Vagina (tissue), 2 donors: ENCODE measurements at regions of chr9 and their contacts with region 1.

Region 1: DNA sequence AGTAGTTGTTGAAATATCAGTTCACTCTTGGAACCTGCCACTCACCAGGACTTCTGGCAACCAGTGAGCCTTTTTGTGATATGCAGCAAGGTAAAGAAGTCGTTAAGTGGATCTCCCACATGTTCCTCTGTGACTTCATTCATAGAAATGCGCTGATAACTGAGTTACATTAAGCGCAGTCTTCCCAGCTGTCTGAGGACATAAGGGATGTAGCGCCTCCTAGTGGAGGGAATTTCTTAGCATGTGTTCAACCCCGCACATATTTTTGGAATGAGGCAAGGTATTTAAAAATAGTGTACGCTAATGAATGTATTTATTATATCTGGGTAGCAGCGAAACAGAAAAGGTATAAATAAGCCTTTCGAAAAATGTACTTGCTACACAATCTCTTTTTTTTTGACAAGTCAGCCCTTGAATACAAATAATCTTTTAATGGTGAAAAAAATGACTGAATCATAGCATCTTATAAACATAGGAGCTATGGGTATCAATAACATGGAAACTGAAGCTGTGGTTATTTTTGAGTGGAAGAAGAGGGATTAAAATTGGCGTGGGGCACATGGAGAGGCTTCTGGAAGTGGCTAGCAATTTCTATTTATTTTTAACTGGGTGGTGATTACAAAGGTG is 38.0 kb downstream of the PALM2AKAP2 start:
- DNase-seq: no peak
- H3K4me3 ChIP-seq: no peak overlapping the region
- H3K27ac ChIP-seq: no peak overlapping the region
- H3K4me1 ChIP-seq: peaks cover 16% of the 10 kb centered on the region
- H3K27me3 ChIP-seq: no peaks in the 10 kb centered on the region
- CTCF ChIP-seq: peak; percentile 8 to 87 (median 70)
- POLR2A ChIP-seq: no peak

Region 2: GRCh38 chr9:109574068-109574882 is 243.7 kb before region 1 on chr9:
- intact Hi-C with region 1: loop called (anchors 10 kb)
- DNase-seq: no peak
- H3K4me3 ChIP-seq: no peak overlapping the region
- H3K27ac ChIP-seq: no peak overlapping the region
- H3K4me1 ChIP-seq: no peaks in the 10 kb centered on the region
- H3K27me3 ChIP-seq: no peaks in the 10 kb centered on the region
- CTCF ChIP-seq: peak; percentile 39 to 56 (median 50)
- POLR2A ChIP-seq: no peak

Region 3: GRCh38 chr9:109792951-109793546 is 24.9 kb before region 1 on chr9:
- intact Hi-C with region 1: loop called (anchors 2 kb)
- DNase-seq: no peak
- H3K4me3 ChIP-seq: no peak overlapping the region
- H3K27ac ChIP-seq: peak overlapping the region; percentile 49
- H3K4me1 ChIP-seq: peaks cover 24% of the 10 kb centered on the region
- H3K27me3 ChIP-seq: no peaks in the 10 kb centered on the region
- CTCF ChIP-seq: no peak
- POLR2A ChIP-seq: no peak